ENCODE measurements at regions of chr10 and their contacts with region 1.

Region 1: GRCh38 chr10:123380497-123381085 is 226.4 kb downstream of the BUB3 start:
- DNase-seq: no peak
- H3K4me3 ChIP-seq: no peak overlapping the region
- H3K27ac ChIP-seq: no peak overlapping the region
- H3K4me1 ChIP-seq: no peaks in the 10 kb centered on the region
- H3K27me3 ChIP-seq: no peaks in the 10 kb centered on the region
- CTCF ChIP-seq: peak; percentile 12 to 59 (median 46)
- POLR2A ChIP-seq: no peak

Region 2: DNA sequence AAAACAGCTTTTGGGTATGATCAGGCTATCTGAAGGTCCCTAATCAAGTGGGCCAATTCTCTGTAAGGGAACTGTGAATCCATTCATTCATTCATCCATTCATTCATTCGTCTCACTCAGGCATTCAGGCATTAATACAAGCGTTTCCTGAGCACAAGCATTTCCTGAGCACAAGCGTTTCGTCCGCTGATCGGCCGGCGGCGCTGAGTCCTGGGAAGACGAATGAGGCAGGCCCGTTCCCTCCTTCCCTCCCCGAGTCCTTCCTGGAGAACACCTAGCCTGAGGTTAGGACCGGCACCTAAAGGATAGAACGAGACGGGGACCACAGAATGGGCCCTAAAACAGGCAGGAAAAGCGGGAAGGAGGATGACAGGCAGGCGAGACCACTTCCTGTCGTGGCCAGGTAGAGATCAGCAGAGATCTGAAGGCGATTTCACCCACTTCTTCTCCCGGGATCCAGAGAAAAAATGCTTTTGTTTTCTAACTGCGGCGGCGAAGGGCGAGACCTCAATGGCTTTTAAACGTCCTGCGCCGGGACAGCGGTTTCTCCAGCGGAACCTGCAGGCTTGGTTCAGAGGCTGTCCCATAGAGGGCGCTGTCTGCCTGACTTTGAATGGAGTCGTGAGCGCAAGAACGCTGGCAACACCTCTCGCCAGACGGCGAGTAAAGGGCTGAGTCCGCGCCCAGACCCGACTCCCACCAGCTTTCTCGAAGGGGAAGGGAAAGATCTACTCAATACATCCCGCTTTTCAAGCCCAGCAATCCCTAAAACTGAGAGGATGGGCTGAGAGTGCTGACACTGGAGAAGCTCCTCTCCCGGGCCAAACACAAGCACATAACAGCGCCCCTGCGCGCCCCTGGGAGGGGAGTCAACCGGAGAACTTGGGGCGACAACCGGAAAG is 247.8 kb before region 1 on chr10:
- intact Hi-C with region 1: loop called (anchors 2 to 10 kb)
- DNase-seq: peak; percentile 75 to 93 (median 88)
- H3K4me3 ChIP-seq: no peak overlapping the region
- H3K27ac ChIP-seq: no peak overlapping the region
- H3K4me1 ChIP-seq: peaks cover 20 to 44% of the 10 kb centered on the region in 2 donors
- H3K27me3 ChIP-seq: peaks cover 83% of the 10 kb centered on the region
- CTCF ChIP-seq: peak; percentile 80 to 94 (median 88)
- POLR2A ChIP-seq: no peak

Region 3: GRCh38 chr10:123496375-123496774 is 115.8 kb after region 1 on chr10:
- intact Hi-C with region 1: no loop called
- DNase-seq: no peak
- H3K4me3 ChIP-seq: no peak overlapping the region
- H3K27ac ChIP-seq: no peak overlapping the region
- H3K4me1 ChIP-seq: no peaks in the 10 kb centered on the region
- H3K27me3 ChIP-seq: peaks cover 5% of the 10 kb centered on the region
- CTCF ChIP-seq: no peak
- POLR2A ChIP-seq: no peak

Measured in adrenal gland (tissue), 19 donors.